ENCODE measurements at regions of chr11 and their contacts with region 1.

Region 1: DNA sequence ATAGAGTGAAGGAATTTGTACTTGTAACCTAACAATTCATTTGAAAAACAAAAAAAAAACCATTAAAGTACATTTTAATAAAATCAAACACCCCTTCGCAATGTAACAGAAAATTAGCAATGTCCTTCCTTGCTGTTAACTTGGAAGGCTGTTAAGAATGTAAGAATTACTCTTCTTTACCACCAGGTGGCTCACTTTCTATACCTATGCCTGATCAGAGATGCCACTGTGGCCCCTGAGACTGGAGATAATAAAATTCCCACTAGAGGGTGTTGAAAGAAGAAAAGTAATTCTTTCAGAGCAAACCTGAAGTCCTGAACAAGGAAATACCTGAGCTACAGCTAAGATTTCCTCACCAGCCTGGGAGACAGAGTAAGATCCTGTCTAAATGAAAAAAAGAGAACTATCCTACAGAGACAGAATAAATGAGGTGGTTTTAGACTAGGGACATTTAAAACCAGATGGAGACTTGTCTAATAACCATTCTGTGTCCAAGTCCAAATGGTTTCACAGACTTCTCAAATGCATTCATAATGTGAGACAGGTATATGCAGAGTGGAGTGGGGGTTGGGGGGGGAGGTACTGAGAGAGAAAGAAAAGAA is 1089.3 kb downstream of the FAM181B start:
- DNase-seq: peak in 1 of 10 donors; percentile 8

Region 2: GRCh38 chr11:81579339-81579738 is 65.0 kb before region 1 on chr11:
- intact Hi-C with region 1: no loop called
- DNase-seq: no peak

Region 3: DNA sequence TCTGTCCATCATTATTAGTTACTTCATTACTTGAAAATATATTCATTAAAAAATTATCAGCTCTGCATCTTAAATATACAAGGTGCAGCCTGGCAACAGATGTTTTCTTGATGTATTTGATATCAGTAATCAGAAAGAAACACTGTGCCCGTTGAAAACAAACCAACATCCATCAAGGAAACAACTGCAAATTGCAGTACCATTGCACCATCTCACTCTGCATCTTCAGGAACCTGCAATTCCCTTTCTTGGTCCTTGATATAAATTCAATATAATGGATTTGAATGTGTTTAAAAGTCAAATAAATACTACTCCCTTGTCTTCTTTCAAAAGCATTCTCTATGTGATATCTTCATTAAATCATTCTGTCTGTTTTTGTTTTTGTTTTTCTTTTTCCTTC is 41.8 kb before region 1 on chr11:
- intact Hi-C with region 1: no loop called
- DNase-seq: no peak

Region 4: GRCh38 chr11:82229341-82229740 is 585.0 kb after region 1 on chr11:
- intact Hi-C with region 1: loop called (anchors 5 kb)
- DNase-seq: no peak

Region 5: DNA sequence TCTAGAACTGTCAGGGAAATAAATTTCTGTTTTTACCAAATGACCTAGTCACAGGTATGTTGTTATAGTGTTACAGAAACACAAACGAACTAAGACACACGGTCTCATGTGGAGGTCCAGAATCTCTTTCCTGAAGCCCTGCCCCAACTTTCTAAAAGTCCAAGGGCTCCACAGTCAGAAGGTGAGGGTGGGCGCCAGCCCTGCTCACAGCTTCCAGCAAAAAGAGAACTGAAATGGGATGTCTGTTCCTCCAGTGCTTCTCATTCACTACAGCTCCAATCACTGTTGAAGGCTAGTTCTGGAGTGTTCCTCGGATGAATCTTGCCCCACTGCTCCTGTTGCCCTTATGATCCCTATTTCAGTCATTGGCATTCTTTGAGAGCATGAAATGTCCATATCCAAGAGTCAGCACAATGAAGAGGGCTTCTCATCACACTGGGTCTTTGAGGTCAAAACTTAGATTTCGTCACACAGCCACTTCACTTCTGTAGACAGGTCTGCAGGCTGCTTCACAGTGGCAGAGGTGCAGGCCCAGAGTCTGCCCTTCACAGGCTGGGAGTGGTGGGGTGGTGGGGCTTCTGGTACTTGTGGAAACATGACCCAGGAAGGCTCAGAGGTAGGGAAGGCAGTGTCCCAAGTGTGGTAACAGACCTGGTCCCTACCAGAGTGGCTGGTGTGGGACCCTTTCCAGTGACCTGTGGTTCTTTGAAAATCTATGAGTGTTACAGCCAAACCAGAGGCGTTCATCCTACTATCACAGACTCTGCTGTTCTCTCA is 1054.4 kb after region 1 on chr11:
- intact Hi-C with region 1: loop called (anchors 2 kb)
- DNase-seq: peak in 1 of 10 donors; percentile 61